Activated CD4-positive, alpha-beta T cell treated with anti-CD3 and anti-CD28 coated beads for 36 hours (primary cell): ENCODE measurements at regions of chr17 and their contacts with region 1.

Region 1: DNA sequence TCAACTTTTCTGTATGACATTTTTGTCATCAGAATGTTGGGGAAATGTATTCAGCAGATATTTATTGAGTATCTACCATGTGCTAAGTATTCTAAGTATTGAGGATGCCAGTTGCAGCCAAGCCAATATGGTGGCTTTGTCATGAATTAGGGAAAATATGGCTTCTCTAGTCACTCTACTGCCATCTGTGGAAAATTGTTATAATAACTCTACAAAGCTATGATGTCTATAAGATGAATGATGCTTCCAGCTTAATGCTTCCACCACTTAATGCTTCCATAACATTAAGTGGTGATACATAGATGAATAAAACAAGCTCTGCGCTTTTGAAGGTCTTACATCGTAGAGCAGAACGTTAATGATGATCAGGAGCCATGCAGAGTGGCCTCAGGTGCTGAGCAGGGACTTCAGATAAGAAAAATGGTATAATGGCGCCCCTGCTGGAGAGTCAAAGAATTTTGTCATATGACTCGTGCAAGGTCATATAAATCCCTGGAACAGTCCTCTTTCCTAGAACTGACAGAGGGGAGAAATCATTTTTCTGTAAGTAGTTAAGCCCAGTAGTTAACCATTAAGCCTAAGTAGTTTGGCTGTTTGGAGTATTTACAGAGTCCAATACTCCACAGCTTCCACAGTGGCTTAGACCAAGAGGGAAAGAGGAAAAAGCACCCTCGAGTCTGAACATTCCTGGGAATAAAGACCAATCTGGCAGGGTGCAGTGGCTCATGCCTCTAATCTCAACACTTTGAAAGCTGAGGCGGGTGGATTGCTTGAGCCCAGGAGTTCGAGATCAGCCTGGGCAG is 2.7 kb upstream of the TMIGD1 start:
- DNase-seq: peak; percentile 80
- ATAC-seq: peak; percentile 20
- H3K4me3 Mint-ChIP-seq: no peak overlapping the region
- H3K27ac Mint-ChIP-seq: peak overlapping the region; percentile 4
- H3K4me1 Mint-ChIP-seq: peaks cover 43% of the 10 kb centered on the region
- H3K27me3 Mint-ChIP-seq: no peaks in the 10 kb centered on the region

Region 2: GRCh38 chr17:29699283-29699682 is 637.3 kb before region 1 on chr17:
- CTCF ChIA-PET with region 1: no interaction called
- POLR2A ChIA-PET with region 1: no interaction called
- intact Hi-C with region 1: no loop called
- DNase-seq: no peak
- ATAC-seq: no peak
- H3K4me3 Mint-ChIP-seq: no peak overlapping the region
- H3K27ac Mint-ChIP-seq: no peak overlapping the region
- H3K4me1 Mint-ChIP-seq: peaks cover 17% of the 10 kb centered on the region
- H3K27me3 Mint-ChIP-seq: no peaks in the 10 kb centered on the region

Region 3: DNA sequence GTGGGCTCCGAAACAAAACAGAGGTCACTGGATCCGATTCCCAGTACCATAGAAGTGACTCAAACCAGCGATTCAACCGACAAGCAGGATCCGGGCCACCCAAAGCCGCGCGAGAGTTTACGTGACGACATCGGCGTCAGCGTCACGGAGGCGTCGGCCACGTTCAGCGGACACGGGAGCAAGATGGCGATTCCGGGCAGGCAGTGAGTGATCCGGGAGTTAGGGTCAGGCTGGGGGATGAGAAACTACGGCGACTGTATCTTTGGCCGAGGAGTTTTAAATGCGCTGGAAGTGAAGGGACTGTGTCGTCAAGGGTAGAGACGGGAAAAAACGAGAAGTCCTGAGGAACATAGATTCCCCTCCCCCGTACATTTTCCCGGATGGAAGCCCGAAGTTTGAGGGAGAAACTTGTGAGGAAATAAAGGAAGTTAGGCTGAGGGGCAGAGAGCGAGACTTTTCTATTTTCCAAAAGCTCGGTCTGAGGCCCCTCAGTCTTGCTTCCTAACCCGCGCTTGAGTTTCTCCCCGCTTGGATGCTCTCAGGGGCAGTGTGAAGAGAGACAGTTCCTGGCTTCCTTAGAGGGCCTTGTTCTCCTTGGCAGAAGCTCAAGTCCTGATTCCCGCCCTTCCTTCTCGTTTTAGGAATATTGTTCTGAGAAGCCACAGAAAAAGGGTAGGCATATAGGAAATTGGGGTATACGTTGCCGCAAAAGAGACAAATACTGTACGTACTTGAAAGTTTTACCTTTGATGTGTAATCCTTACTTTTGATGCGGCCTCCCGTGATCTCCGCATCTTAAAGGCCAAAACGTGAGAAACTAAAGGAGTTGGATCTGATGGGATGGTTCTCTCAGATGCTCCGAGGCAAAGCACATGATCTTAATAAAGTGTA is 219.7 kb before region 1 on chr17 and contains the start of gene NSRP1:
- CTCF ChIA-PET with region 1: interaction called, 3 read pairs
- POLR2A ChIA-PET with region 1: no interaction called
- intact Hi-C with region 1: loop called (anchors 1 to 2 kb)
- DNase-seq: peak; percentile 97
- ATAC-seq: peak; percentile 95
- H3K4me3 Mint-ChIP-seq: peak within 1 kb of the TSS; percentile 90
- H3K27ac Mint-ChIP-seq: peak within 1 kb of the TSS; percentile 98
- H3K4me1 Mint-ChIP-seq: peaks cover 41% of the 10 kb centered on the region
- H3K27me3 Mint-ChIP-seq: no peaks in the 10 kb centered on the region
- total RNA-seq, gene NSRP1: 29.9 to 43.0 TPM

Region 4: GRCh38 chr17:30173649-30174048 is 162.9 kb before region 1 on chr17:
- CTCF ChIA-PET with region 1: interaction called, 5 read pairs
- POLR2A ChIA-PET with region 1: no interaction called
- intact Hi-C with region 1: loop called in 1 of 2 experiments (anchors 5 kb)
- DNase-seq: peak; percentile 48
- ATAC-seq: peak; percentile 89
- H3K4me3 Mint-ChIP-seq: no peak overlapping the region
- H3K27ac Mint-ChIP-seq: no peak overlapping the region
- H3K4me1 Mint-ChIP-seq: peaks cover 23% of the 10 kb centered on the region
- H3K27me3 Mint-ChIP-seq: no peaks in the 10 kb centered on the region

Region 5: GRCh38 chr17:30252940-30253717 is 83.4 kb before region 1 on chr17:
- CTCF ChIA-PET with region 1: interaction called, 4 read pairs
- POLR2A ChIA-PET with region 1: no interaction called
- intact Hi-C with region 1: loop called in 1 of 2 experiments (anchors 5 kb)
- DNase-seq: no peak
- ATAC-seq: no peak
- H3K4me3 Mint-ChIP-seq: no peak overlapping the region
- H3K27ac Mint-ChIP-seq: no peak overlapping the region
- H3K4me1 Mint-ChIP-seq: no peaks in the 10 kb centered on the region
- H3K27me3 Mint-ChIP-seq: no peaks in the 10 kb centered on the region

Region 6: GRCh38 chr17:30291543-30292285 is 44.9 kb before region 1 on chr17 and contains the start of gene BLMH:
- CTCF ChIA-PET with region 1: interaction called, 27 read pairs
- POLR2A ChIA-PET with region 1: interaction called, 3 read pairs
- intact Hi-C with region 1: loop called (anchors 1 kb)
- DNase-seq: peak; percentile 90
- ATAC-seq: peak; percentile 82
- H3K4me3 Mint-ChIP-seq: peak within 1 kb of the TSS; percentile 91
- H3K27ac Mint-ChIP-seq: peak within 1 kb of the TSS; percentile 94
- H3K4me1 Mint-ChIP-seq: peaks cover 13% of the 10 kb centered on the region
- H3K27me3 Mint-ChIP-seq: no peaks in the 10 kb centered on the region
- total RNA-seq, gene BLMH: 54.3 to 74.5 TPM

Region 7: DNA sequence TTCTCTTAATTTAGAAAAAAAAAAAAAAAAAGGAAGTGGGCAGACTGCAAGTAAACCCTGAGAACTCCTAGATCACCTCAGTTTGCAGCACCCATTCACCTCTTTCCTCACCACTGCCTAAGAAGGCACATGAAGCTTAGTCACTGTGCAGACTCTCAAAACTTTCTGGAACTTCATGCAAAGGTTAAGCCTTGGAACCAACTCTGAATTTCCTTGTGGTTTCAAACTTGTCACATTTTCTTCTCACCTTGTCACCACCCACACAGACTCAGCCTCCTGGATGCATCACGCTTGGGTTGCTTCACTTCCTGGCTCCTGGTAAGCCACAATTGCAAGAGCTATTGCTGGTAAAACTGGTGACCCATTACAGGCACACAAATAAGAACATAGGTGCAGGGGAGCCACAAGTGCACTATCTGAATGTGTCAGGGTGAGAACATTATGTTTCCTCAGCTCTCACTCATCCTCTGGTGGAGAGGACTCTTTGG is 27.2 kb after region 1 on chr17:
- CTCF ChIA-PET with region 1: interaction called, 16 read pairs
- POLR2A ChIA-PET with region 1: interaction called, 10 read pairs
- intact Hi-C with region 1: loop called (anchors 1 kb)
- DNase-seq: peak; percentile 92
- ATAC-seq: peak; percentile 96
- H3K4me3 Mint-ChIP-seq: no peak overlapping the region
- H3K27ac Mint-ChIP-seq: peak overlapping the region; percentile 85
- H3K4me1 Mint-ChIP-seq: peaks cover 33% of the 10 kb centered on the region
- H3K27me3 Mint-ChIP-seq: no peaks in the 10 kb centered on the region

Region 8: GRCh38 chr17:30534938-30535921 is 198.7 kb after region 1 on chr17:
- CTCF ChIA-PET with region 1: no interaction called
- POLR2A ChIA-PET with region 1: no interaction called
- intact Hi-C with region 1: no loop called
- DNase-seq: no peak
- ATAC-seq: no peak
- H3K4me3 Mint-ChIP-seq: no peak overlapping the region
- H3K27ac Mint-ChIP-seq: no peak overlapping the region
- H3K4me1 Mint-ChIP-seq: no peaks in the 10 kb centered on the region
- H3K27me3 Mint-ChIP-seq: no peaks in the 10 kb centered on the region

Region 9: DNA sequence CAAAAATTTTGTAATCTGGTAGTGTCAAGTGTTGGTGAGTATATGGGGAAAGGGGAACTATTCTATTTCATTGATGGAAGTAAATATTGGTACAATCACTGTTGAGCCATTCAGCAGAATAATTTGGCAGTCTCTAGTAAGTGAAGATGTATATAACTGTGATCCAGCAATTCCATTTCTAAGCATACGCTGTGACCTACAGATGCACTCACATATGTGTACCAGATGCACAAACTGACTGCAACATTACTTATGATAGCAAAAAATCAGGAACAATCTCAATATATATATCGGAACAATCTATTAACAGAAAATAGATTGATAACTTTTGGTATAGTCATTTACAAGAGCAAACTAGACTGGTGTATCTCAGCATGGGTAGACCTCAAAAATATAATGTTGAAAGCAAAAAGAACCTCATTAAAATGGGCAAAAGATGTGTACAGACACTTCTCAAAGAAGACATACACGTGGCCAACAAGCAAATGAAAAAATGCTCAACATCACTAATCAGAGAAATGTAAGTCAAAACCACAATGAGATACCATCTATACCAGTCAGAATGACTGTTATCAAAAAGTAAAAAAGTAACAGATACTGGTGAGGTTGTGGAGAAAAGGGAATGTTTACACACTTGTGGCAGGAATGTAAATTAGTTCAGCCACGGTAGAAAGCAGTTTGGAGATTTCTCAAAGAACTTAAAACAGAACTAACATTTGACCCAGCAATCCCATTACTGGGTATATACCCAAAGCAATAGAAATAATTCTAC is 605.9 kb after region 1 on chr17:
- CTCF ChIA-PET with region 1: no interaction called
- POLR2A ChIA-PET with region 1: no interaction called
- intact Hi-C with region 1: no loop called
- DNase-seq: no peak
- ATAC-seq: peak; percentile 26
- H3K4me3 Mint-ChIP-seq: no peak overlapping the region
- H3K27ac Mint-ChIP-seq: no peak overlapping the region
- H3K4me1 Mint-ChIP-seq: peaks cover 2% of the 10 kb centered on the region
- H3K27me3 Mint-ChIP-seq: no peaks in the 10 kb centered on the region